Posterior cingulate gyrus (tissue), 11 donors: ENCODE measurements at regions of chr2 and their contacts with region 1.

Region 1: GRCh38 chr2:231715258-231715997 is 7.1 kb downstream of the PTMA start:
- DNase-seq: peak in 8 of 10 donors; percentile 70 to 91 (median 79)

Region 2: GRCh38 chr2:231674587-231675338 is 40.7 kb before region 1 on chr2:
- intact Hi-C with region 1: loop called (anchors 1 kb)
- DNase-seq: peak in 8 of 10 donors; percentile 49 to 95 (median 76)